Activated CD4-positive, alpha-beta memory T cell treated with anti-CD3 and anti-CD28 coated beads, Interleukin-2, amount 10 ng/mL, durations not matched to agents 7 days and 5 days (primary cell): ENCODE measurements at regions of chr2 and their contacts with region 1.

Region 1: GRCh38 chr2:100381240-100381639 is 36.2 kb downstream of the CHST10 start:
- DNase-seq: peak; percentile 71
- H3K4me3 Mint-ChIP-seq: no peak overlapping the region
- H3K27ac Mint-ChIP-seq: no peak overlapping the region
- H3K4me1 Mint-ChIP-seq: no peaks in the 10 kb centered on the region
- H3K27me3 Mint-ChIP-seq: peaks cover 6% of the 10 kb centered on the region

Region 2: DNA sequence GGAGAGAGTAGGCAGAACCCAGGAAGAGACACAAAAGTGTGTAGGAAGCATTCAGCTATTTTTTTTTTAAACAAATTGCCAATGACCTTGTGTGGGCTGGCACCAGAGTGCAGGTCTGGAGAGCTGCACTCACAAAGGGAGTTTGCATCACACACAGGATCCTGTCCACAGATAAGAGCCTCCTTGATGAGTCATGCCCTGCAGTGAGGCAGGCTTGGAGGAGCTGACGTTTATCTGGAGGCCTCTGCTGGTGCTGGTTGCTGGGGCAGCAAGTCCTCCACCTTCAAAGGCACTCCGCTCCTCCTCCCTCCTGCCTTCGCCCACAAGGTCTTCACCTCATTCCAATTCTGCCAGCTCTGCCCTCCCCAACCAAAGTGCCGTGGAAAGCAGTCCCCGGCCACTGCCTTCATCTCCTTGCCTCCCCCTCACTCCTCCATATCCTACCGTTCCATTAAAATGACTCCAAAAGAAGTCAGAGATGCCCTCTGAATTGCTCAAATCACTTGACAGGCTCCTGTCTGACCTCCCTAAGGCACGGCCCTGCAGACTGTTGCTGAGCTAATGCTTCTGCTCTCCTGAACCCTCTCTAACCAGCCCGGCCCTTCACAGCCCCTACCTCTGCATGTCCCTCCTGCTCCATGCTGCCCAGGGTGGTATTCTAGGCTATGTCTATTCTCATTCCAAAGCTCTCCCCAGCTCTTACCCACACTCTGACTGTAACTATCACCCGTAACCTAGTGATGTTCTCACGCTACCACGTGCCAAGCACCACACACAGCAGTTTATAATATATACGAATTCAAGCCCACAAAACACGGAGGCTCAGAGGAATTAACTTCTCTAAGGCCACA is 89.9 kb before region 1 on chr2:
- CTCF ChIA-PET with region 1: interaction called, 11 read pairs
- POLR2A ChIA-PET with region 1: no interaction called
- DNase-seq: peak; percentile 78
- H3K4me3 Mint-ChIP-seq: no peak overlapping the region
- H3K27ac Mint-ChIP-seq: no peak overlapping the region
- H3K4me1 Mint-ChIP-seq: peaks cover 8% of the 10 kb centered on the region
- H3K27me3 Mint-ChIP-seq: peaks cover 22% of the 10 kb centered on the region

Region 3: GRCh38 chr2:100365434-100365833 is 15.8 kb before region 1 on chr2:
- CTCF ChIA-PET with region 1: interaction called, 16 read pairs
- POLR2A ChIA-PET with region 1: no interaction called
- DNase-seq: no peak
- H3K4me3 Mint-ChIP-seq: no peak overlapping the region
- H3K27ac Mint-ChIP-seq: no peak overlapping the region
- H3K4me1 Mint-ChIP-seq: peaks cover 5% of the 10 kb centered on the region
- H3K27me3 Mint-ChIP-seq: peaks cover 16% of the 10 kb centered on the region

Region 4: DNA sequence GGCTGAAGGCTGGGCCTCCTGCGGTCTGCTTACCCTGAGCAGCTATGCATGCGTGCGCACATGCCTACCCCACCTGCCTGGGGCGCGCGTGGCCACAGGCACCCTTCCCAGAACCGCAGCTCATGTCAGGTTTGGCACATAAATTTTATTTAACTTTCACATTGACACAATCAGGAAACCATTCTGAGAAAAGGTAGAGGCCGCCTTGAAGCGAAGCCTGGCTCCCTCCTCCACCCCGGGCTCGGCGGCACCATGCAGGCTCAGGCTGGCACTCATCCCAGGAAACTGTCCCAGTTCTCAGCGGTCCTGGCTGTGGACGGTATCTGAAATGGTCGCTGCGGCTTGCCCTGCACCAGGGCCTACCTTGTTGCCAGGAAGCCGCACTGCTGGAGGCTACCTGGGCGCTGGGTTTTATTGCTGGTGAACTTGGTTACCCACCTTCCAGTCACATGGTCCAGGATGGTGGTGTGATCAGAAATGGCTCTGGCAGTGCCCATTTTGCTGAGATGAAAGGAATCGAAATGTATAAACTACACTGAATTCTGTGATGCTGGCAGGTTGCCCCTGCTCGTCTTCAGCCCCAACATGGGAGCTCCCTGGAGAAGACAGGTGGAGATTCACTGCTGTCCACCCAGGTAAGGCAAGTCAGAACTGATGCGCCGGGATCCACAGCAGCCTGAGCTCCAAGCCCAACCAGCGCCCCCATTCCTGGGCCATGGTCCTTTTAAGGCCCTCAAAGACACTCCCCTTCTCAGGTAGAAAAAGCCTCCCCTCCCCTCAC is 10.7 kb after region 1 on chr2:
- CTCF ChIA-PET with region 1: interaction called, 25 read pairs
- POLR2A ChIA-PET with region 1: no interaction called
- DNase-seq: no peak
- H3K4me3 Mint-ChIP-seq: no peak overlapping the region
- H3K27ac Mint-ChIP-seq: no peak overlapping the region
- H3K4me1 Mint-ChIP-seq: no peaks in the 10 kb centered on the region
- H3K27me3 Mint-ChIP-seq: peaks cover 2% of the 10 kb centered on the region

Region 5: DNA sequence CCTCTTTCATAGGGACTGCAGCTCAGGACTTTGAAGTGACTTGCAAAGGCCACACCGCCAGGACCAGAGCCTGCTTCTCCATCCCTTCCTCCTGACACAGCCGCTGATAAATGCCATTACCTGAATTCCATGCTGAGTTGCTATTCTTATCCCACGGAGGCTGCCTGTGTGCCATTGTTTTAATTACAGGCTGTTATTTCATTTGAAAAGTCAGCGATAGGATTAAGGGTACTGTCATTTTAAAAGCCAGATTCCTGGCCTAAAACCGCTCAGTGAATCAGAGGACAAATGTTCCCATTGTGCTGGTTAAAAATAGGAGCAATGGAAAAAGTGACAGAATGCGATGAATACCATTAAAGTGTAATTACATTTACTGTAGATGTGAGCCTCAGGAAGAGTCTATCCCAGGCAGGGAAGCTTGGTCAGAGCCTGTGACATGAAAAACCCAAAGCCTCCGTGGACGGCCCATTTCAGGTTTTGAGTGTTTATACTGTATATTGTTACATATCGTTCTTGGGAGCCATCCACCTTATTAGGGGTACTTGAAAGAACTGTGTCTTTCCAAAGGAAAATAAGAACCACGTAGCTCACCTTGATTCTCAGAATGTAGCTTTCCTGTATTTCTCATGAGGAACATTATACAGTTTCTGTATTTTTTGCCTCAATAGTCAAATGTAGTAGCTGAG is 222.9 kb after region 1 on chr2:
- CTCF ChIA-PET with region 1: no interaction called
- POLR2A ChIA-PET with region 1: no interaction called
- DNase-seq: no peak
- H3K4me3 Mint-ChIP-seq: no peak overlapping the region
- H3K27ac Mint-ChIP-seq: no peak overlapping the region
- H3K4me1 Mint-ChIP-seq: peaks cover 6% of the 10 kb centered on the region
- H3K27me3 Mint-ChIP-seq: peaks cover 6% of the 10 kb centered on the region